Naive thymus-derived CD4-positive, alpha-beta T cell (primary cell): ENCODE measurements at regions of chr2 and their contacts with region 1.

Region 1: DNA sequence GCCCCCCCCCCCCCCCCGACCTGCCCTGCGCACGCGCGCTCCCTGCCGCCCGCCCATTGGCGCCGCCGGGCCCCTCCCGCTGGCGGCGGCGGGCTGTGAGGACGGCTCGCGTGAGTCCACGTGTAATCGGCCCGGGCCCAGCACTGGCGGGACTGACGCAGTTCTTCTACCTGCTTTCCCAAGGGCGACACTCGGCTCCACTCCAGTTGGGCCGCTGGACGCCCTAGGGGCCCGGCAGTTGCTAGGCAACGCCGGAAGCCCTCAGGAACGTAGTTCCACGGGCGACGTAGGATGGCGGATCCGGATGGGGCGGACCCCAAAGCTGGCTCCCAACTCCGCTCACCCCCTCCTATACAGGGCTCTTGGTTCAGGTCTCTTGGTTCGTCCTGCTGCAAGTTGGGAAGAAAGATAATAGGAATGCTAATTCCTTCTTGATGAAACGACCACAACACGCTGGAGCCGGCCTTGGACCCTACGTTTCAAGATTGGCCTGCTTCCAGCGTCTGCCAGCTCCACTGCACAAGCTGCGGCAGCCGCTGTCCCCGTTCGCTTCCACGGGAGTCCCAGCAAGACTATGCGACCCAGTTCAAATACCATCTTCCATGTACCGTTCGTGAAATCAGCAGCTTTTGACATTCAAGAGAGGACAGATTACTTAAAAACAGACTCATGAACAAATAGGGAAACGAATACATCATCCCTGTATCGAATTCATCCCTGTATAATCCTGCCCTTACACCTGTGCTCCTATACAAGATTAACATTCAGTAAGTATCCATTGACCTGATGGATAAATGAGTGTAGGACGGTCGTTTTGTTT is 415 bp upstream of the MCFD2 start:
- DNase-seq: peak; percentile 80 to 90 (median 86)
- ATAC-seq: peak; percentile 91
- H3K4me3 ChIP-seq: peak overlapping the region; percentile 94
- H3K4me3 Mint-ChIP-seq: peak overlapping the region; percentile 86 to 98 (median 93)
- H3K27ac ChIP-seq: peak overlapping the region; percentile 98
- H3K27ac Mint-ChIP-seq: peak overlapping the region; percentile 80 to 97 (median 90)
- H3K4me1 ChIP-seq: peaks cover 22 to 26% of the 10 kb centered on the region in 2 donors
- H3K4me1 Mint-ChIP-seq: peaks cover 34 to 67% (median 52%) of the 10 kb centered on the region in 7 donors
- H3K27me3 ChIP-seq: no peaks in the 10 kb centered on the region
- H3K27me3 Mint-ChIP-seq: no peaks in the 10 kb centered on the region

Region 2: GRCh38 chr2:46984642-46985476 is 68.8 kb after region 1 on chr2:
- CTCF ChIA-PET with region 1: interaction called, 3 read pairs
- POLR2A ChIA-PET with region 1: interaction called, 5 read pairs
- intact Hi-C with region 1: loop called in 1 of 2 experiments (anchors 1 kb)
- DNase-seq: peak in 1 of 9 donors; percentile 53
- ATAC-seq: peak; percentile 69
- H3K4me3 ChIP-seq: no peak overlapping the region
- H3K4me3 Mint-ChIP-seq: peak overlapping the region in 7 of 10 donors; percentile 34 to 79 (median 58)
- H3K27ac ChIP-seq: peak overlapping the region; percentile 18
- H3K27ac Mint-ChIP-seq: peak overlapping the region; percentile 87 to 97 (median 92)
- H3K4me1 ChIP-seq: peaks cover 7 to 16% of the 10 kb centered on the region in 2 donors
- H3K4me1 Mint-ChIP-seq: peaks cover 18 to 73% (median 33%) of the 10 kb centered on the region in 7 donors
- H3K27me3 ChIP-seq: no peaks in the 10 kb centered on the region
- H3K27me3 Mint-ChIP-seq: no peaks in the 10 kb centered on the region

Region 3: DNA sequence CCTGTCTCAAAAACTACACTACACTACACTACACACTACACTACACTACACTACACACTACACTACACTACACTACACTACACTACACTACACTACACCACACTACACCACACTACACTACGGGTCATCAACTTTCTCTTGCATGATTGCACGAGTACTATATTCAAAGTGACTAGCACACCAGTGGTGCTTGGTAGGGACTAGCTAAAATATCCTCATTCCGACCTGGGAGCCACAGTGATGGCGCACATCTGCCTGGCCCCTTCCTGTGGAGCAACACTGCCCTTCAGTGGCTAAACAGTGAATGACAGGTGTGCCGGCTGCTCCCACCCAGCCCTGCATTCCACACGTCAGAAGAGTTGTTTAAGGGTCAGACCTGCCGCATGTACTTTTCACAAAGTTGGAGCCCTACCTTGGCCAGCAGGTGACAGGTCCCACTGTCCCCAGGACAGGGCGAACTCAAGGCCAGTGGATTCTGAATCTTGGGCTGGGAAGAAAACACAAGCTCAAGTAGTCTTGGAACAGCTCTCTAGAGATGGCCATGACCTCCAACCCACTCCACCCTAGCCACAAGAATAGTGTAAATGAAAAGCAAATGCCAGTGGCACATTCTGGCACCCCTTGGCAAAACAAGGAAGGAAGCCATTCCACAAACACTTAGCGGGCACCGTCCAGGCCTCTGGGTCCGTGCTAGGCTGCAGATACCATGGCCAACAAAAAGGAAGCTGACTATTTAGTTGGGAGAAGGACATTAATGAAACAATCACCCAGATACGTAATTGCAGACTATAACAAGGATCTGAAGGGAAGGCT is 407.2 kb after region 1 on chr2:
- CTCF ChIA-PET with region 1: interaction called, 3 read pairs
- POLR2A ChIA-PET with region 1: no interaction called
- intact Hi-C with region 1: loop called (anchors 1 kb)
- DNase-seq: peak; percentile 12 to 70 (median 51)
- ATAC-seq: peak; percentile 97
- H3K4me3 ChIP-seq: no peak overlapping the region
- H3K4me3 Mint-ChIP-seq: no peak overlapping the region
- H3K27ac ChIP-seq: no peak overlapping the region
- H3K27ac Mint-ChIP-seq: no peak overlapping the region
- H3K4me1 ChIP-seq: no peaks in the 10 kb centered on the region
- H3K4me1 Mint-ChIP-seq: no peaks in the 10 kb centered on the region
- H3K27me3 ChIP-seq: no peaks in the 10 kb centered on the region
- H3K27me3 Mint-ChIP-seq: peaks cover 0 to 11% (median 0%) of the 10 kb centered on the region in 5 donors

Region 4: DNA sequence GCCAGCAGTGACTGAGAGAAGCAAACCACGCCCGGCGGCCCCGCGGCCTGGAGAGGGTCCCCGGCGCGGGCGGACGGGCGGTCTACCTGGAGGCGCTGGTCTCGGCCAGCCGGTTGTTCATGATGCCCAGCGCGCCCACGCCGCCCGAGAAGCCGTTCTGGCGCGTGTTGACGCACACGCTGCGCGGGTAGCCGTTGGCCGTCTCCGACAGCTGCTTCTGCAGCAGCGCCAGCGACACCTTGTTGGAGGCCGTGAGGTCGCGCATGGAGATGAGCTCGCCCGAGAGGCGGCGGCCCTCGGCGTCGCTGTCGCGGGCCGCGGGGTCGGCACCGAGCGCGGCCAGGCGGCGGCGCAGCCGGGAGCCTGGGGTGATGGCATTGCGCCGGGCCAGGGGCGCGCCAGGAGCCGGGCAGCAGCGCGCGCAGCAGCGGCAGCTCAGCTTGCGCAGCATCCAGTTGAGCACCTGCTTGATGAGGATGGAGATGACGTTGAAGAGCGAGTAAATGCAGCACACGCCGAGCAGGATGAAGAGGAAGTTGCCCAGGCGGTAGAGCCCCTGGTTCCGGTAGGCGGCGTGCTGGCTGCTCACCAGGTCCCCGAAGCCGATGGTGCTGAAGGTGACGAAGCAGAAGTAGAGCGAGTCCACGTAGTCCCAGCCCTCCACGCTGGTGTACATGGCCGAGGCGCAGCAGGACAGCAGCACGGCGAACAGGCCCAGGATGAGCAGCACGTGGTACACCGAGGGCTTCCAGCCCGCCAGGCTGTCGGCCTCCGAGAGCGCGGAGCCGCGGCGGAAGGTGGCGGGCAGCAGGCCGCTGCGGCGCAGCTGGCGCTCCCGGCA is 605.0 kb after region 1 on chr2:
- CTCF ChIA-PET with region 1: no interaction called
- POLR2A ChIA-PET with region 1: no interaction called
- intact Hi-C with region 1: loop called in 1 of 2 experiments (anchors 10 kb)
- DNase-seq: peak; percentile 43 to 79 (median 63)
- ATAC-seq: peak; percentile 91
- H3K4me3 ChIP-seq: peak overlapping the region; percentile 74
- H3K4me3 Mint-ChIP-seq: peak overlapping the region; percentile 90 to 99 (median 95)
- H3K27ac ChIP-seq: peak overlapping the region; percentile 15
- H3K27ac Mint-ChIP-seq: peak overlapping the region; percentile 82 to 96 (median 90)
- H3K4me1 ChIP-seq: peaks cover 0 to 4% of the 10 kb centered on the region in 2 donors
- H3K4me1 Mint-ChIP-seq: peaks cover 5 to 21% (median 20%) of the 10 kb centered on the region in 7 donors
- H3K27me3 ChIP-seq: no peaks in the 10 kb centered on the region
- H3K27me3 Mint-ChIP-seq: peaks cover 0 to 4% (median 0%) of the 10 kb centered on the region in 5 donors